Breast epithelium (tissue), 4 donors: ENCODE measurements at regions of chr3 and their contacts with region 1.

Region 1: GRCh38 chr3:176906046-176906905 is 291.0 kb downstream of the TBL1XR1 start:
- DNase-seq: no peak
- H3K4me3 ChIP-seq: no peak overlapping the region
- H3K27ac ChIP-seq: peak overlapping the region; percentile 39 to 77
- H3K4me1 ChIP-seq: peaks cover 0 to 10% of the 10 kb centered on the region in 2 donors
- H3K27me3 ChIP-seq: no peaks in the 10 kb centered on the region
- CTCF ChIP-seq: no peak
- POLR2A ChIP-seq: no peak

Region 2: DNA sequence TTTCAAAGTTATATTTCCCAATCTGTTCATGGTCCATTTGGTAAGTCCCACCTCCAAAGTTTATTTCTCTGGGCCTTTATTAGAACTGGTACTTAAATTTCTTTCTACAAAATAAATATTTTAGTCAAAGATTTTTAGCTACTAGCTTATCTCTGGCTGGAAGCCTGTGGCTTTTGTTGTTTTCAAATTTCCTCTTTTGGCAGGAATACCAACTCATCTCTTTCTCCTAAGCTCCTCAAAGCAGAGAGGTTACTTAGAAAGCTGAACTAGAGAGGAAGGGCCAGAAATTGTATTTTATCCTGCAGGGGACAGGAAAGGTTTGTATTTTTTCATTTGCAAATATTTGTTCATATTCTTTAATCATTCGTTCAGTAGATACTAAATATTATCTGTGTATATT is 63.2 kb after region 1 on chr3:
- intact Hi-C with region 1: loop called (anchors 2 kb)
- DNase-seq: no peak
- H3K4me3 ChIP-seq: no peak overlapping the region
- H3K27ac ChIP-seq: no peak overlapping the region
- H3K4me1 ChIP-seq: no peaks in the 10 kb centered on the region
- H3K27me3 ChIP-seq: no peaks in the 10 kb centered on the region
- CTCF ChIP-seq: no peak
- POLR2A ChIP-seq: no peak